GM12878 (cell line): ENCODE measurements at regions of chr12 and their contacts with region 1.

Region 1: DNA sequence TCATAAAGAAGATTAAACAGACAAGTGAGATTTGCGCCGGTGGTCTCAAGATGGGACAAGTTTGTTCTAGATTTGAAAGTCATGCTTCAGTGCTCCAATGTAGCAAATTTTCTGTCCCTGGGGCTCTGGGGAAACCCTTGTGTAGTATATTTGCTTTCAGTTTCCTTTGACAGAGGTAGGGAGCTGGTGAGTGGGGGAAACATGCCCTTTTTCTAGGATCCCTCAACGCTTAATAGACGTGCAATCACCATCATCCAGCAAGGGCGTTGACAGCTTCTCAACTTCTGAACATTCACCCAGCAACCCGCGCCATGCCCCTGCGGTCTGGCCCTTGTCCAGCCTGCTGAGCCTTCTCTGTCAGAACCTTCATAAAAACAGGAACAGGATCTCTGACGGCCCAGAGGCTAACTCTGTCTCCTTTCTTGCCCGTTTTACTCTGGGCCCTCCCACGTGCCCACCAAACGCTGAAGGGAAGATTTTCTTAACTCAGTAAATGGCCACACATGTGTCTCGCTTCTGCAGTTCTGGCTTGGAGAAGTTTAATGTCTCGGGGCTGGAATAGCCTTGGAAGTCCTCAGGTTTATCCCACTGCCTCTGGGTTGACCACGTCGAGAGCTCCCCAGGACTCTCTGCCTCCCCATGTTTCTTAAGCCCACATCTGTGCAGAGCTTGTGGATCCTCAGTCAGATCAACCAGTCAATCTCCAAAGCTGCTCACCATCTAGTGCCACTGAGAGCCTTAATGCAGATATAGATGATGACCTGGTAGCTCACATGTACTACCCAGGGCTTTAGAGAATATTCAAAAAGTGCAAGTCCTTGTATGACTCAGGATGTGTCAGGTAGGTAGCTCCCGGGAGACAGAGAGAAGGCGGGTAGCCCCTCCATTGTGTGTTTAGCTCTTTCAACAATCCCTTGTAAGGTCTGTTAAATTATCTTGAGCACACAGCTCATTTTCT is 58.1 kb upstream of the CCND2 start:
- DNase-seq: peak; percentile 89
- ATAC-seq: peak; percentile 91
- H3K4me3 ChIP-seq: peak overlapping the region; percentile 50; the same call in 1 of the 2 replicates
- H3K27ac ChIP-seq: peak overlapping the region; percentile 93
- H3K4me1 ChIP-seq: peaks cover 27% of the 10 kb centered on the region
- H3K27me3 ChIP-seq: no peaks in the 10 kb centered on the region
- CTCF ChIP-seq: no peak
- EP300 ChIP-seq: peak; percentile 41 to 71; a peak in 3 of 4 replicates
- POLR2A ChIP-seq: peak; percentile 42; the same call in 1 of the 2 replicates
- RAD21 ChIP-seq: no peak; the same call in 1 of the 2 replicates

Region 2: GRCh38 chr12:4118017-4118510 is 97.4 kb before region 1 on chr12:
- CTCF ChIA-PET with region 1: interaction called, 11 read pairs
- POLR2A ChIA-PET with region 1: interaction called, 26 read pairs
- RAD21 ChIA-PET with region 1: interaction called, 50 read pairs
- SMC1A ChIA-PET with region 1: interaction called, 36 read pairs
- in situ Hi-C with region 1: no loop called
- intact Hi-C with region 1: loop called (anchors 1 kb)
- DNase-seq: peak; percentile 89
- ATAC-seq: peak; percentile 54
- H3K4me3 ChIP-seq: peak overlapping the region; percentile 56
- H3K27ac ChIP-seq: peak overlapping the region; percentile 95
- H3K4me1 ChIP-seq: peaks cover 50% of the 10 kb centered on the region
- H3K27me3 ChIP-seq: no peaks in the 10 kb centered on the region
- CTCF ChIP-seq: no peak
- EP300 ChIP-seq: peak; percentile 83 to 94; a peak in 3 of 4 replicates
- POLR2A ChIP-seq: no peak
- RAD21 ChIP-seq: no peak

Region 3: GRCh38 chr12:4148418-4149056 is 67.0 kb before region 1 on chr12:
- CTCF ChIA-PET with region 1: interaction called, 19 read pairs
- POLR2A ChIA-PET with region 1: interaction called, 34 read pairs
- RAD21 ChIA-PET with region 1: interaction called, 97 read pairs
- SMC1A ChIA-PET with region 1: interaction called, 64 read pairs
- in situ Hi-C with region 1: no loop called
- intact Hi-C with region 1: loop called (anchors 2 kb)
- DNase-seq: peak; percentile 93
- ATAC-seq: peak; percentile 72
- H3K4me3 ChIP-seq: no peak overlapping the region
- H3K27ac ChIP-seq: peak overlapping the region; percentile 72
- H3K4me1 ChIP-seq: peaks cover 77% of the 10 kb centered on the region
- H3K27me3 ChIP-seq: no peaks in the 10 kb centered on the region
- CTCF ChIP-seq: no peak
- EP300 ChIP-seq: peak in 1 of 2 experiments; percentile 74; a peak in 1 of 4 replicates
- POLR2A ChIP-seq: no peak
- RAD21 ChIP-seq: no peak

Region 4: GRCh38 chr12:4191642-4192041 is 23.9 kb before region 1 on chr12:
- CTCF ChIA-PET with region 1: interaction called, 3 read pairs
- POLR2A ChIA-PET with region 1: no interaction called
- RAD21 ChIA-PET with region 1: interaction called, 20 read pairs
- SMC1A ChIA-PET with region 1: interaction called, 18 read pairs
- in situ Hi-C with region 1: no loop called
- intact Hi-C with region 1: no loop called
- DNase-seq: no peak
- ATAC-seq: peak; percentile 99
- H3K4me3 ChIP-seq: no peak overlapping the region
- H3K27ac ChIP-seq: no peak overlapping the region
- H3K4me1 ChIP-seq: no peaks in the 10 kb centered on the region
- H3K27me3 ChIP-seq: no peaks in the 10 kb centered on the region
- CTCF ChIP-seq: no peak
- EP300 ChIP-seq: no peak
- POLR2A ChIP-seq: no peak
- RAD21 ChIP-seq: no peak

Region 5: DNA sequence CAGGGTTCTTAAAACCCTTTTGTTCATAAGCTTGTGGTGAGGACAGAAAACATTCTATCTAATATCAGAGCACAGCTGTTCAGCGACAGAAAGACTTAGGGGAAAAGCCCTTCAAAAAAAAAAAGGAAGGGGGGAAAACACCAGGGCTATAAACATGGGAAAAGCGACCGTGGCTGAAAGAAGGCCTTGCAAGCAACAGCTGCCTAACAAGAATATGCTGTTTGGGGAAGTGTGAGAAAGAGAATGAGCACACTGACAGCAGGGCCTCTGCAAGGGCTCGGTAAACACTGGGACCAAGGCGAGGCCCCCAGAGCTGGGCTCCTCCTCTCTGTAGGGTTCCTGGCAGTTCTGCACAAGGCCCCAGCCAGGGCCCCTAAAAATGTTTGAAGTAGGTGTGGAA is 30.6 kb after region 1 on chr12:
- CTCF ChIA-PET with region 1: interaction called, 6 read pairs
- POLR2A ChIA-PET with region 1: interaction called, 14 read pairs
- RAD21 ChIA-PET with region 1: interaction called, 17 read pairs
- SMC1A ChIA-PET with region 1: interaction called, 8 read pairs
- in situ Hi-C with region 1: no loop called
- intact Hi-C with region 1: no loop called
- DNase-seq: no peak
- ATAC-seq: peak; percentile 89
- H3K4me3 ChIP-seq: no peak overlapping the region
- H3K27ac ChIP-seq: peak overlapping the region; percentile 45
- H3K4me1 ChIP-seq: peaks cover 17% of the 10 kb centered on the region
- H3K27me3 ChIP-seq: no peaks in the 10 kb centered on the region; a peak in 1 of 4 replicates
- CTCF ChIP-seq: no peak
- EP300 ChIP-seq: no peak
- POLR2A ChIP-seq: no peak
- RAD21 ChIP-seq: 0 out of 2 replicates have a peak, but pooled peaks have one; percentile 0

Region 6: GRCh38 chr12:4269279-4269991 is 53.9 kb after region 1 on chr12:
- CTCF ChIA-PET with region 1: interaction called, 23 read pairs
- POLR2A ChIA-PET with region 1: interaction called, 84 read pairs
- RAD21 ChIA-PET with region 1: interaction called, 109 read pairs
- SMC1A ChIA-PET with region 1: interaction called, 53 read pairs
- in situ Hi-C with region 1: no loop called
- intact Hi-C with region 1: loop called (anchors 1 kb)
- DNase-seq: no peak
- ATAC-seq: peak; percentile 22
- H3K4me3 ChIP-seq: peak overlapping the region; percentile 70
- H3K27ac ChIP-seq: peak overlapping the region; percentile 68
- H3K4me1 ChIP-seq: peaks cover 17% of the 10 kb centered on the region
- H3K27me3 ChIP-seq: no peaks in the 10 kb centered on the region; a peak in 1 of 4 replicates
- CTCF ChIP-seq: peak; percentile 20 to 59 (median 33); a peak in 5 of 6 replicates
- EP300 ChIP-seq: peak in 1 of 2 experiments; percentile 75; a peak in 2 of 4 replicates
- POLR2A ChIP-seq: 0 out of 2 replicates have a peak, but pooled peaks have one; percentile 22
- RAD21 ChIP-seq: peak; percentile 46